CD8-positive, alpha-beta T cell (primary cell): ENCODE measurements at regions of chr3 and their contacts with region 1.

Region 1: DNA sequence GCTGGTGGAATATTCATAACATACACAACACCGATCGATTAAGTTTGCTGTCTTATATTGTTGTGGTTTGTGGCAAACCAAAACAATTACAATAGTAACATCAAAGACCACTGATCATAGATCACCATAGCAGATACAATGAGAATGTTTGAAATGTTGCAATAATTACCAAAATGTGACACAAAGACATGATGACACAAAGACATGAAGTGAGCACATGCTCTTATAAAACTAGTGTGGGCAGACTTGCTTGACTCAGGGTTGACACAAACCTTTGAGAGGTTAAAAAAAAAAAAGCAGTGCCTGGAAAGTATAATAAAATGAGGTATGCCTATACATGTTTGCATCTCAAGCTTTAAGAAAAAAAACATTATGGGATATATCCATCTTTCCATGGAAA is 130.3 kb downstream of the NR1I2 start:
- DNase-seq: no peak
- ATAC-seq: no peak
- H3K4me3 ChIP-seq: no peak overlapping the region
- H3K4me3 Mint-ChIP-seq: no peak overlapping the region
- H3K27ac ChIP-seq: no peak overlapping the region
- H3K27ac Mint-ChIP-seq: peak overlapping the region; percentile 45
- H3K4me1 ChIP-seq: peaks cover 14% of the 10 kb centered on the region
- H3K4me1 Mint-ChIP-seq: peaks cover 24% of the 10 kb centered on the region
- H3K27me3 ChIP-seq: no peaks in the 10 kb centered on the region
- H3K27me3 Mint-ChIP-seq: no peaks in the 10 kb centered on the region
- CTCF ChIP-seq: no peak

Region 2: GRCh38 chr3:118949113-118949760 is 963.0 kb before region 1 on chr3:
- CTCF ChIA-PET with region 1: no interaction called
- POLR2A ChIA-PET with region 1: no interaction called
- intact Hi-C with region 1: loop called in 1 of 2 experiments (anchors 5 kb)
- DNase-seq: peak in 2 of 9 experiments; percentile 34 to 55
- ATAC-seq: peak; percentile 77
- H3K4me3 ChIP-seq: no peak overlapping the region
- H3K4me3 Mint-ChIP-seq: peak overlapping the region; percentile 45
- H3K27ac ChIP-seq: no peak overlapping the region
- H3K27ac Mint-ChIP-seq: peak overlapping the region; percentile 85
- H3K4me1 ChIP-seq: peaks cover 31% of the 10 kb centered on the region
- H3K4me1 Mint-ChIP-seq: peaks cover 55% of the 10 kb centered on the region
- H3K27me3 ChIP-seq: no peaks in the 10 kb centered on the region
- H3K27me3 Mint-ChIP-seq: no peaks in the 10 kb centered on the region
- CTCF ChIP-seq: no peak

Region 3: GRCh38 chr3:119206611-119207511 is 705.4 kb before region 1 on chr3:
- CTCF ChIA-PET with region 1: no interaction called
- POLR2A ChIA-PET with region 1: no interaction called
- intact Hi-C with region 1: no loop called
- DNase-seq: no peak
- ATAC-seq: no peak
- H3K4me3 ChIP-seq: no peak overlapping the region
- H3K4me3 Mint-ChIP-seq: no peak overlapping the region
- H3K27ac ChIP-seq: no peak overlapping the region
- H3K27ac Mint-ChIP-seq: peak overlapping the region; percentile 68
- H3K4me1 ChIP-seq: peaks cover 17% of the 10 kb centered on the region
- H3K4me1 Mint-ChIP-seq: peaks cover 30% of the 10 kb centered on the region
- H3K27me3 ChIP-seq: no peaks in the 10 kb centered on the region
- H3K27me3 Mint-ChIP-seq: no peaks in the 10 kb centered on the region
- CTCF ChIP-seq: no peak

Region 4: DNA sequence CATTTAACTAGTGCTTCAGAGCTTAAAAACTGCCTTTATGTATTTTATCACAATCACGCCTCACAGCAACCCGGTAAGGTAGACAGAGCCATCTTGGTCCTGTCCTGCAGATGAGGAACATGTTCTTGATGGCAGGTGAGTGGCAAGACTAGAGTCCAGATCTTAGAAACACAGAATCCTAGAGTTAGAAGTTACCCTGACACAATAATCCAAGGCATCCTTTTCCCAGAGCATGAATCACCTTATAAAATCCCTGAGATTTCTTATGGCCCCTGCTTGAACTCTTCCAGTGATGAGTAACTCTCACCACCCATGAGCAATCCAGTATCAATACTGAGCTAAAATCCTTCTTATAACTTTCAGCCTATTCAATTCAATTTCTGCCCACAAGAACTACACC is 268.7 kb before region 1 on chr3:
- CTCF ChIA-PET with region 1: no interaction called
- POLR2A ChIA-PET with region 1: no interaction called
- intact Hi-C with region 1: no loop called
- DNase-seq: no peak
- ATAC-seq: no peak
- H3K4me3 ChIP-seq: no peak overlapping the region
- H3K4me3 Mint-ChIP-seq: no peak overlapping the region
- H3K27ac ChIP-seq: no peak overlapping the region
- H3K27ac Mint-ChIP-seq: no peak overlapping the region
- H3K4me1 ChIP-seq: no peaks in the 10 kb centered on the region
- H3K4me1 Mint-ChIP-seq: peaks cover 5% of the 10 kb centered on the region
- H3K27me3 ChIP-seq: no peaks in the 10 kb centered on the region
- H3K27me3 Mint-ChIP-seq: no peaks in the 10 kb centered on the region
- CTCF ChIP-seq: no peak

Region 5: DNA sequence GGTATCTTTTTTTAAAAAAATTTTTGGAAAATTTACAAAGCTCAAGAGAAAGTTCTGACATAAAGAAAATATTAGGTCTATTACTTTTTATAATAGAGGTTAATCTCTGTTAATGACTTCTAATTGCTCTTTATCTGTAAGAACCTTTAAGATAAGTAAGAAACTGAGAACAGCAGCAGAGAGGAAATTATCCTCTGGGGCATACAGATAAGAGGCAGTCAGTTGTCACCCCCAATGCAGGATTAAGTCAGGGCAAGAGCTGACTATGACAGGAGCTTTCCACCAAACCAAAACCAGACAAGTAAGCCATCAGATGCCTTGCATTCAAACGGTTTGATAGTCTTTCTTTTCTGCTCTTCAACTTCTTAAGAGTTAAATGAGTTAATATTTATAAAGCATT is 33.1 kb after region 1 on chr3:
- CTCF ChIA-PET with region 1: no interaction called
- POLR2A ChIA-PET with region 1: no interaction called
- intact Hi-C with region 1: loop called in 1 of 2 experiments (anchors 1 kb)
- DNase-seq: no peak
- ATAC-seq: no peak
- H3K4me3 ChIP-seq: no peak overlapping the region
- H3K4me3 Mint-ChIP-seq: no peak overlapping the region
- H3K27ac ChIP-seq: no peak overlapping the region
- H3K27ac Mint-ChIP-seq: no peak overlapping the region
- H3K4me1 ChIP-seq: peaks cover 5% of the 10 kb centered on the region
- H3K4me1 Mint-ChIP-seq: peaks cover 46% of the 10 kb centered on the region
- H3K27me3 ChIP-seq: no peaks in the 10 kb centered on the region
- H3K27me3 Mint-ChIP-seq: no peaks in the 10 kb centered on the region
- CTCF ChIP-seq: no peak